ENCODE measurements at regions of chr2 and their contacts with region 1.

Region 1: GRCh38 chr2:27370026-27370815 is at the starts of genes EIF2B4 and SNX17:
- DNase-seq: peak; percentile 99
- ATAC-seq: peak; percentile 89 to 97 (median 90)
- H3K4me3 ChIP-seq: peak within 1 kb of the TSS; percentile 93
- H3K4me3 Mint-ChIP-seq: peak within 1 kb of the TSS; percentile 94
- H3K27ac ChIP-seq: peak within 1 kb of the TSS; percentile 91
- H3K27ac Mint-ChIP-seq: peak within 1 kb of the TSS; percentile 92
- H3K4me1 ChIP-seq: peaks cover 34% of the 10 kb centered on the region
- H3K4me1 Mint-ChIP-seq: peaks cover 40 to 41% of the 10 kb centered on the region in 2 donors
- H3K27me3 ChIP-seq: no peaks in the 10 kb centered on the region
- H3K27me3 Mint-ChIP-seq: no peaks in the 10 kb centered on the region
- CTCF ChIP-seq: peak; percentile 72
- total RNA-seq, gene EIF2B4: 35.0 to 44.5 (median 40.8) TPM
- total RNA-seq, gene SNX17: 96.3 to 107 (median 100) TPM

Region 2: GRCh38 chr2:27335311-27335710 is 34.9 kb before region 1 on chr2:
- intact Hi-C with region 1: no loop called
- DNase-seq: no peak
- ATAC-seq: no peak
- H3K4me3 ChIP-seq: no peak overlapping the region
- H3K4me3 Mint-ChIP-seq: no peak overlapping the region
- H3K27ac ChIP-seq: no peak overlapping the region
- H3K27ac Mint-ChIP-seq: no peak overlapping the region
- H3K4me1 ChIP-seq: no peaks in the 10 kb centered on the region
- H3K4me1 Mint-ChIP-seq: no peaks in the 10 kb centered on the region
- H3K27me3 ChIP-seq: no peaks in the 10 kb centered on the region
- H3K27me3 Mint-ChIP-seq: no peaks in the 10 kb centered on the region
- CTCF ChIP-seq: no peak

Region 3: DNA sequence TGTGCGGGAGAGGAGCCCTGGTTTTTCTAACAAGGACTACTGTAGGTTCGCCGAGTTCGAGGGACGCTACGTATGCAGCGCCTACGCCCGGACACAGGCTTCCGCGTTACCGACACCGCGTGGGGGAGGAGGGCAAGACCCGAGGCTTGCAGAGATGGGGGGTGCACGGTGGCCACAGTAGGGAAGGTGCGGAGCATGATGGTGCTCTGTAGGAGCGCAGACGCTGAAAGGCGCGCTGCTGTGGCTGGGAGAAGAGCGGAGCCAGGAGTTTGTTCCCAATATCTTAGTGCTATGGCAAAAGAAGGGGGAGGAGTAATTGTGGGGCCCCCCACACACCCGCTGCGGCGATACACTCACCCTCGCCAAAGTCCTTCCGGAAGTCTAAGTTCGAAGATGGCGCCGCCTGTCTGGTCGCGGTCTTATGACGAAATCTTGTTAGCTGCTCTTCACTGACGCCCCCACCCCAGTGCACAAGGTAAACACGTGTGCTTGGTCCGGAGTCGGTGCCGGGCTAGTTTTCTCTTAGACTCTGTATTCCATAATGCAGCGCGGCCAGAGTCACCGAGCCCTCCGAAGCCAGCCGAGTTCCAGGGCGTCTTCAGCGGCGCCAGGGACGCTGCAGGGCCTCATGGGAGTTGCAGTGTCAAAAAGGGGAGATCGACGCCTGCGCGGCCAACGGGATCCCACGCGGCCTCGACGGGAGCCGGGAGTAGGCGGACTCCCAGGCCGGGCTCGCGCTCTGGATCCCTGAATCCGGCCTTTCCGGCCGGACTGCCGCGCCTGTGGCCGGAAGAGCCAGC is 13.6 kb before region 1 on chr2 and contains the start of gene GTF3C2:
- intact Hi-C with region 1: loop called (anchors 1 kb)
- DNase-seq: peak; percentile 89 to 97
- ATAC-seq: peak; percentile 82 to 92 (median 83)
- H3K4me3 ChIP-seq: peak within 1 kb of the TSS; percentile 72
- H3K4me3 Mint-ChIP-seq: peak within 1 kb of the TSS; percentile 99
- H3K27ac ChIP-seq: peak within 1 kb of the TSS; percentile 96
- H3K27ac Mint-ChIP-seq: peak within 1 kb of the TSS; percentile 98 to 100
- H3K4me1 ChIP-seq: peaks cover 25% of the 10 kb centered on the region
- H3K4me1 Mint-ChIP-seq: peaks cover 41 to 45% of the 10 kb centered on the region in 2 donors
- H3K27me3 ChIP-seq: no peaks in the 10 kb centered on the region
- H3K27me3 Mint-ChIP-seq: no peaks in the 10 kb centered on the region
- CTCF ChIP-seq: no peak
- total RNA-seq, gene GTF3C2: 56.1 to 68.7 (median 59.7) TPM

Region 4: GRCh38 chr2:27380626-27381545 is 10.7 kb after region 1 on chr2 and contains the start of gene ZNF513:
- intact Hi-C with region 1: loop called (anchors 1 kb)
- DNase-seq: peak; percentile 80 to 94
- ATAC-seq: peak; percentile 88 to 95 (median 95)
- H3K4me3 ChIP-seq: peak within 1 kb of the TSS; percentile 50
- H3K4me3 Mint-ChIP-seq: peak within 1 kb of the TSS; percentile 89
- H3K27ac ChIP-seq: peak within 1 kb of the TSS; percentile 92
- H3K27ac Mint-ChIP-seq: peak within 1 kb of the TSS; percentile 91 to 97
- H3K4me1 ChIP-seq: peaks cover 18% of the 10 kb centered on the region
- H3K4me1 Mint-ChIP-seq: peaks cover 25% of the 10 kb centered on the region in 2 donors
- H3K27me3 ChIP-seq: no peaks in the 10 kb centered on the region
- H3K27me3 Mint-ChIP-seq: no peaks in the 10 kb centered on the region
- CTCF ChIP-seq: no peak
- total RNA-seq, gene ZNF513: 24.2 to 28.1 (median 26.1) TPM

Region 5: GRCh38 chr2:27390822-27391679 is 20.8 kb after region 1 on chr2:
- intact Hi-C with region 1: loop called (anchors 1 kb)
- DNase-seq: peak in 1 of 2 donors; percentile 75
- ATAC-seq: peak; percentile 82 to 89 (median 87)
- H3K4me3 ChIP-seq: no peak overlapping the region
- H3K4me3 Mint-ChIP-seq: peak overlapping the region; percentile 79
- H3K27ac ChIP-seq: peak overlapping the region; percentile 76
- H3K27ac Mint-ChIP-seq: peak overlapping the region; percentile 93 to 97
- H3K4me1 ChIP-seq: peaks cover 9% of the 10 kb centered on the region
- H3K4me1 Mint-ChIP-seq: peaks cover 15 to 25% of the 10 kb centered on the region in 2 donors
- H3K27me3 ChIP-seq: no peaks in the 10 kb centered on the region
- H3K27me3 Mint-ChIP-seq: no peaks in the 10 kb centered on the region
- CTCF ChIP-seq: no peak

Region 6: GRCh38 chr2:27409321-27410073 is 39.3 kb after region 1 on chr2 and contains the start of gene PPM1G:
- intact Hi-C with region 1: loop called (anchors 1 kb)
- DNase-seq: peak; percentile 97 to 98
- ATAC-seq: peak; percentile 95 to 100 (median 97)
- H3K4me3 ChIP-seq: peak within 1 kb of the TSS; percentile 91
- H3K4me3 Mint-ChIP-seq: peak within 1 kb of the TSS; percentile 90
- H3K27ac ChIP-seq: peak within 1 kb of the TSS; percentile 79
- H3K27ac Mint-ChIP-seq: peak within 1 kb of the TSS; percentile 92 to 93
- H3K4me1 ChIP-seq: peaks cover 27% of the 10 kb centered on the region
- H3K4me1 Mint-ChIP-seq: peaks cover 30 to 38% of the 10 kb centered on the region in 2 donors
- H3K27me3 ChIP-seq: no peaks in the 10 kb centered on the region
- H3K27me3 Mint-ChIP-seq: peaks cover 10 to 13% of the 10 kb centered on the region in 2 donors
- CTCF ChIP-seq: no peak
- total RNA-seq, gene PPM1G: 63.9 to 73.8 (median 69.5) TPM

Region 7: DNA sequence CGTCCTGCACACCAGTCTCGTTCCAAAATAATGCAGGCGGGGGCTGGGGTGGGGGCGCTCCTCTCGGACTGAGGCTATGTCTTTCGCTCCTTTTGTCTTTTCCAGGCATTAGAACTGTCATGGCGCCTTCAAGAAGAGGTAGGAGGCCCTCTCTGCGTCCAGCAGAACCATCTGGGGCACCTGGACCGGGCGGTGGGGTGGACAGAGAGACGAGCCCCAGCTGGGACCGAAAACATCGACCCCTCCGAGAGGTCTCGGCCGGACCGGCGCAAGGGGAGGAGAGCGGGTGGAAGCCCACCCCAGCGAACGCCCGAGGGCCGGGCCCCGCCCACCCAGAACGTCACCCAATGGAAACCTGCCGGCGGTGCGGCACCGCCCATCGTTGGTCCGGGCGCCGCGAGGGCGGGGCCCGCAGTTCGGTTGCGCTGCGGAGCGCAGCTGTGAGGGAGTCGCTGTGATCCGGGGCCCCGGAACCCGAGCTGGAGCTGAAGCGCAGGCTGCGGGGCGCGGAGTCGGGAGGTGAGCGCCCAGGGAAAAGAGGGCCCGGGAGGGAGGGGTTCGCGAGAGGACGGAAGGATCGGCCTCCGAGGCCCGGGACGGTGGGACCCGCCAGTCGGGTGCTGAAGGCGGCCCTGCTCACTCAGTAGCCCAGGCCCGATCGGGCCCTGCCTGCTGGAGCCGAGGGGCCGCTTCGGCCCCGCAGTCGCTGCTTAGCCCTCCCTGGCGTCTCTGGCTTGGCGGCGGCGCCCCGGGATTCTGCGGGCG is 58.2 kb after region 1 on chr2 and contains the start of gene NRBP1:
- intact Hi-C with region 1: loop called (anchors 1 kb)
- DNase-seq: peak; percentile 94 to 95
- ATAC-seq: peak; percentile 84 to 97 (median 90)
- H3K4me3 ChIP-seq: peak within 1 kb of the TSS; percentile 69
- H3K4me3 Mint-ChIP-seq: peak within 1 kb of the TSS; percentile 95
- H3K27ac ChIP-seq: peak within 1 kb of the TSS; percentile 78
- H3K27ac Mint-ChIP-seq: peak within 1 kb of the TSS; percentile 94 to 97
- H3K4me1 ChIP-seq: peaks cover 28% of the 10 kb centered on the region
- H3K4me1 Mint-ChIP-seq: peaks cover 42 to 45% of the 10 kb centered on the region in 2 donors
- H3K27me3 ChIP-seq: no peaks in the 10 kb centered on the region
- H3K27me3 Mint-ChIP-seq: no peaks in the 10 kb centered on the region
- CTCF ChIP-seq: no peak
- total RNA-seq, gene NRBP1: 240 to 278 (median 262) TPM

Region 8: DNA sequence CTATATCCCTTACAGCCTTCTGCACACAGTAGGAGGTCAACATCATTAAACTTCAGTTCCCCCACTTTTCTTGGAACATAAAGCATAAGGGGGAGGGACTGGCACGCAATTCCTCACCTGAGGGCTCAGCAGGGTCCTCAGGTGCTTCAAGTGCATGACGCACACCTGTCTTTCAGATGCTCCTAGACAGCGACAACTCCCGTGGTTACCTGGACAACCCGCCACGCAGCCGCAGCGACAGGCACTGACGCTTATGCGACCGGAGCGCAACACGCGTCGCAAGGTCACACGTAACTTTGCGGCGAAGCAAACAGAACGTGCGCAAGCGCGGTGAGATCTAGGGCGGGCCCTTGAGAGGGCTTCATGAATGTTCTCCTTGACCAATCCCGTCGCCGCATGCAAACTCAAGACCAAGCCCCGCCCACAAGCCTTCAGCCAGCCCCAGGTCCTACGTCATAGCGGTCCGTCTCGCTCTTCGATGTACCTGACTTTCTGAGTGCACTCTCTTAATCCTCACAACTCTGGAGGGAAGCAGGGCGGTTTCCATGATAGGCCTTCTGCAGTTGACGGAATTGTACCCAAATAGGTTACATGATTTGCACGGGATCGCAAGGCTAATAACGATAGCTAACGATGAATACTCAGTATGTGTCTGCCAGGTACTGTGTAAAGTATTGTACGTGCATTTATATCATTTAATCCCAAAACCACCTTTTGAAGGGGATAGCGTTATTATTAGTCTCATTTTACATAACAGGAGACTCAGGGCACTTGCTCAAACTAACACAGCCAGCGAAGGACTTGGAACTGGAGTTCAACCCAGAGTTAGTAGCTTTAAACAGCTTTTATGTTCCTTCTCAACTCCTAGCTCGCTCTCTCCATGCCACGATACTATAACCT is 119.5 kb after region 1 on chr2 and contains the start of gene IFT172:
- intact Hi-C with region 1: loop called (anchors 5 kb)
- DNase-seq: peak; percentile 97 to 100
- ATAC-seq: peak; percentile 95 to 99 (median 96)
- H3K4me3 ChIP-seq: peak within 1 kb of the TSS; percentile 45
- H3K4me3 Mint-ChIP-seq: peak within 1 kb of the TSS; percentile 90
- H3K27ac ChIP-seq: peak within 1 kb of the TSS; percentile 77
- H3K27ac Mint-ChIP-seq: peak within 1 kb of the TSS; percentile 92
- H3K4me1 ChIP-seq: peaks cover 21% of the 10 kb centered on the region
- H3K4me1 Mint-ChIP-seq: peaks cover 14 to 20% of the 10 kb centered on the region in 2 donors
- H3K27me3 ChIP-seq: peaks cover 13% of the 10 kb centered on the region
- H3K27me3 Mint-ChIP-seq: peaks cover 12 to 21% of the 10 kb centered on the region in 2 donors
- CTCF ChIP-seq: no peak
- total RNA-seq, gene IFT172: 24.8 to 35.7 (median 30.7) TPM